ENCODE measurements at regions of chr7 and their contacts with region 1.

Region 1: DNA sequence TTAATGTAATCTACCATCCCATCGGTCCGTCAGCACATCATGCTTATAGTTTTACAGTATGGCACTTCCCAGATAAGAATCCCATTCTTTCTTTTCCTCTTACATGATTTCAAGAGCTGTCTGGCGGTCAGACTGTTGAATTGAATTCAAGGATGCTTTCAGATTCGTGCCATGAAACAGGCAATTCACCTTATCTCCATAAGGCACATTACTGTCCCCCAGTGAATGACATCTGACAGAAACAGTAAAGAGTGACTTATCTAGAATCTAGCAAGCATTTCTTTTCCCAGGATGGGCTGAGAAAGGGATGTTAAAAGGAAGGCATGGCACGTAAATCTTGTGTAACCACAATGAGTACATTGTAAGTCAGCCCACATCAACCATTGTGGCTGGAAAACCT is 61.1 kb upstream of the SEM1 start:
- DNase-seq: no peak
- ATAC-seq: no peak

Region 2: GRCh38 chr7:96614154-96614867 is 156.4 kb before region 1 on chr7:
- intact Hi-C with region 1: no loop called
- DNase-seq: no peak
- ATAC-seq: no peak

Region 3: DNA sequence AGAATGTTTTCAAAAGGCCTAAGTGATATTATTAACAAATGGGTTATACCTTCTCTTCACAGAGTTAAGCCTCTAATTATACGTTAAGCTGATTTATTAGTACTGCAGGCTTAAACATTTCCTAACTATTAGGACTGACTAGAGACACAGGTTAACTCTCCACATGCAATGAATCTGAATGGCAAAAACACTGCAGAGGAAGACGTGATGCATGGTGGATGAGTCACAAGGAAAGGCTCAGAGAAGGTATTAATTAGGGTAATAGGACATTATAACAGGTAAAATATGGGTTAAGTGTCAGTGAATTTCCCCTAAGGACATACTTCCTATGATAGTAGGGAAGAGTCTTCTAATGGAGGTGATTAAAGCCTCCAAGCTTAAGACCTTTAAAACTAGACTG is 36.4 kb before region 1 on chr7:
- intact Hi-C with region 1: loop called (anchors 2 kb)
- DNase-seq: no peak
- ATAC-seq: no peak

Region 4: DNA sequence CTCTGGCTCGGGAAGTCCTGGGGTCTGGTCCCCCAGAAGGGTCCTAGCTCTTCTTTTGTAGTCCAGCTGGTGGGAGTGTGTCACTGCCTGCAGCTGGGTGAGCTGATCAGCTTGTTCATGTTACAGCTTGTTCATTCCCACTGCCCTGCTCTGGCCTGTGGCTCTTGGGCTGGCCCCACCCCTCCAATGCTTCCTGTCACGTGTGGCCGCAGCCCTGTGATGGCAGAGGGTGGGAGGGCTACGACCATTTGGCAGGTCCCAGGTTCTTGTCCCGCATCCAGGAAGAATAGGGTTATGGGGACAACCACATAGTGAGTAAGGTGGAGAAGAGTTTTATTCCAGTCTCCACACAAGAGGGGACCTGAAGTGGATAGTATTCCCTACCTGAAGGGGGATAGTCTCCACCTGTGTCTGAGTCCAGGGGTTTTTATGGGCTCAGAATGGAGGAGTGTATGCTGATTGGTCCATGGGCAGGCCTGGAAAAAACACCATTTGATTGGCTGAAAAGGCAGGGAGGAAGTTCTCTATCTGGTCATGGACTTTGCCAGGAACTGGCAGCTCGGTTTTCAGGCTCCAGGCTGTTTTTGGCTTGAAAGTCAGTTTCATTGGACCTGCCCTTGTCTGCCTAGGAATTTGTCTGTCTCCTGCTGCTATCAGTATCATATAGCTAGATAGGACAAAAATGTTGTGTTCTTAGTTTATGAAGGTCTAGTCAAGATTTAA is 359.8 kb after region 1 on chr7:
- intact Hi-C with region 1: no loop called
- DNase-seq: no peak
- ATAC-seq: no peak

Region 5: GRCh38 chr7:97145068-97145467 is 374.3 kb after region 1 on chr7:
- intact Hi-C with region 1: no loop called
- DNase-seq: no peak
- ATAC-seq: no peak